CD14-positive monocyte (primary cell): ENCODE measurements at regions of chr6 and their contacts with region 1.

Region 1: GRCh38 chr6:6686748-6687601 is 98.5 kb downstream of the LY86 start:
- DNase-seq: peak; percentile 70 to 82 (median 75)
- H3K4me3 ChIP-seq: peak overlapping the region in 1 of 3 experiments; percentile 60
- H3K4me3 Mint-ChIP-seq: peak overlapping the region; percentile 53 to 88
- H3K27ac ChIP-seq: peak overlapping the region; percentile 31 to 78
- H3K27ac Mint-ChIP-seq: peak overlapping the region; percentile 76 to 97 (median 87)
- H3K4me1 ChIP-seq: peaks cover 71 to 87% of the 10 kb centered on the region in 2 donors
- H3K4me1 Mint-ChIP-seq: peaks cover 79% of the 10 kb centered on the region
- H3K27me3 ChIP-seq: no peaks in the 10 kb centered on the region
- H3K27me3 Mint-ChIP-seq: peaks cover 0 to 2% (median 1%) of the 10 kb centered on the region in 3 donors
- CTCF ChIP-seq: no peak

Region 2: DNA sequence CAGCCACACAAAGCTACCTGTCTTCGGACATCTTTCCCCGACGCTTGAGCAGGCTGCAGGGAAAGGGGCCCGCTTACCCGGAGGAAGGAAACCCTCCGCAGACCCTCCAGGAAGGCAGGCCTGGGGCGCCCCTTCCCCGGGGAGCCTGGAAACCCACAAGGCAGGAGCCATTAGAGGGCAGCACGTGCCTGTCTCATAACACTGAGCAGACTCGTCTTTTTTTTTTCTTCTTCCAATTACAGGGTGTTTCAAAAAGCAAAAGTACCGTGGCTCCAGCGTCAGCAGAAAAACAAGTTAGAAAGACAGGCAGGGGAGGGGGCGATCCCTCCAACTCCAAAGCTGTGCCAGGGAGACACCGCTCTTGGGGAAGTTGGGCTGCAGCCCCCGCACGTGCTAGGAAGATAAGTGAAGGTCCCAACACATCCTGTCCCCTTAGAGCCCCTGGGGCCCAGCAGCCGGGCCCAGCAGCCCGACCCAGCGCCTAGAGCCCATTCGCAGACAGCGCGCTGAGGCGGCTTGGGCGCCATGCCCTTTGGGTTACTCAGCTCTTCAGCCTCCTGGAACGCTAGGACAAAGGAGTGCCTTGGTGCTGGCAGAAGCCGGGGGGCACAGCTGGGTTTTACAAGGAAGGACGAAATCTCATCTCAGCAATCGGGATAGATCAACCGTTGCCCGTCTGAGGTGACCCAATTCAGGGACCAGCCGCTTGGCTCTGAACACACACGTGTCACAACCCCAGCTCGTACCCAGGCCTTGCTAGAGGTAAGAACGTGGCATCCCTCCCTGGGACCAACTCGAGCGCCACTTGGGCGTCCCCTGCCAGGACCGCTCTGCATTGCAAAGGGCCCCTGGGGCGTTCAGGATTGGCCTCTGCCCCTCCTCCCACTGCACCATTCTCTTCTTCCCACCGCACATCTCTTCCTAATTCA is 37.8 kb after region 1 on chr6:
- intact Hi-C with region 1: loop called in 1 of 2 experiments (anchors 5 kb)
- DNase-seq: peak; percentile 45 to 64 (median 64)
- H3K4me3 ChIP-seq: peak overlapping the region; percentile 3 to 64 (median 21)
- H3K4me3 Mint-ChIP-seq: peak overlapping the region; percentile 71 to 91
- H3K27ac ChIP-seq: peak overlapping the region; percentile 90 to 93
- H3K27ac Mint-ChIP-seq: peak overlapping the region; percentile 93 to 98 (median 95)
- H3K4me1 ChIP-seq: peaks cover 75 to 84% of the 10 kb centered on the region in 2 donors
- H3K4me1 Mint-ChIP-seq: peaks cover 87% of the 10 kb centered on the region
- H3K27me3 ChIP-seq: no peaks in the 10 kb centered on the region
- H3K27me3 Mint-ChIP-seq: peaks cover 0 to 3% (median 0%) of the 10 kb centered on the region in 3 donors
- CTCF ChIP-seq: peak; percentile 68